ENCODE measurements at regions of chr4 and their contacts with region 1.

Region 1: GRCh38 chr4:103075901-103076739 is 441 bp downstream of the SLC9B2 start:
- DNase-seq: peak; percentile 48 to 75 (median 65)
- ATAC-seq: peak; percentile 75 to 80 (median 78)
- H3K4me3 ChIP-seq: peak overlapping the region; percentile 77 to 84
- H3K4me3 Mint-ChIP-seq: peak overlapping the region; percentile 85 to 96 (median 88)
- H3K27ac ChIP-seq: peak overlapping the region; percentile 98
- H3K27ac Mint-ChIP-seq: peak overlapping the region; percentile 98 to 99
- H3K4me1 ChIP-seq: peaks cover 9 to 12% of the 10 kb centered on the region in 2 experiments
- H3K4me1 Mint-ChIP-seq: peaks cover 43 to 55% (median 52%) of the 10 kb centered on the region in 3 donors
- H3K27me3 ChIP-seq: no peaks in the 10 kb centered on the region
- H3K27me3 Mint-ChIP-seq: no peaks in the 10 kb centered on the region

Region 2: DNA sequence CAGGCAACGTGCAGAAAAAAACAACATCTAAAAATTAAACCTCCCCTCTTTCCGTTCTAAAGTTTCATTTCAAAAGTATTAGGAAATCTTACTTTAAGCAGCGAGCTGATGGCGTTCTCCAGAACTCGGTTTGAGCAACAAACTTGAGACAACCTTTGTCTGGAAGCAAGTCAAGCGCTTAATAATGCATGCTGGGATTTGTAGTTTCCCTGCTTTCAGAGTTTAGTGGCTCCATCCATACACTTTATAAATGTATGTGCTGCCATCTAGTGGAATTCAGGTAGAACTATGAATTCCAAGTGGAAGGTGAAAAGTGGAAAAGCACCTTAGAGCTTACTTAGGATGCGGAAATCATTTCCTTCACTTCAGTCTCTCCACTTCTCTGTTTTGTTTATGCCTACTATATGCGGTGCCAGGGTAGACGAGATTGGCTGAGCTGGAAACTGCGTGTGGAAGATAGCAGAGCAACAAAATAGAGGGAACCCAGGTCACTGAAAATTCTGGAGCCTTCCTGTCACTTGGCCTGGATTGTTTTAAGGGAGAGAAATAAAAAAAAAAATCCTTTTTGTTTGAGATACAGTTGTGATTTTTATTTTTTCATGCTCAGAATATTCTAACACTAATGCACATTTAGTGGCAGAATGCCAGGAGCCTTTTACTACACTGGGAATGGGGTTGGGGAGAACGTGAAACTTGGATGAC is 23.7 kb after region 1 on chr4 and contains the start of gene BDH2:
- CTCF ChIA-PET with region 1: interaction called, 3 to 14 read pairs
- POLR2A ChIA-PET with region 1: interaction called, 3 to 4 read pairs
- DNase-seq: peak in 32 of 35 experiments; percentile 6 to 88 (median 39)
- ATAC-seq: peak; percentile 96 to 100 (median 98)
- H3K4me3 ChIP-seq: peak within 1 kb of the TSS; percentile 47 to 53
- H3K4me3 Mint-ChIP-seq: peak within 1 kb of the TSS; percentile 80 to 90 (median 82)
- H3K27ac ChIP-seq: peak within 1 kb of the TSS; percentile 37
- H3K27ac Mint-ChIP-seq: peak within 1 kb of the TSS; percentile 87
- H3K4me1 ChIP-seq: peaks cover 10 to 12% of the 10 kb centered on the region in 2 experiments
- H3K4me1 Mint-ChIP-seq: peaks cover 31 to 35% (median 32%) of the 10 kb centered on the region in 3 donors
- H3K27me3 ChIP-seq: no peaks in the 10 kb centered on the region
- H3K27me3 Mint-ChIP-seq: no peaks in the 10 kb centered on the region
- total RNA-seq, gene BDH2: 11.4 to 22.6 (median 18.5) TPM